Posterior vena cava (tissue), 2 donors: ENCODE measurements at regions of chr19 and their contacts with region 1.

Region 1: GRCh38 chr19:23799321-23799720 is 40.6 kb upstream of the ZNF681 start:
- DNase-seq: no peak

Region 2: GRCh38 chr19:23758187-23759074 is 40.9 kb before region 1 on chr19 and contains the start of gene ZNF681:
- intact Hi-C with region 1: loop called in 1 of 2 experiments (anchors 2 kb)
- DNase-seq: peak; percentile 95
- total RNA-seq, gene ZNF681: 1.5 to 1.6 TPM

Region 3: DNA sequence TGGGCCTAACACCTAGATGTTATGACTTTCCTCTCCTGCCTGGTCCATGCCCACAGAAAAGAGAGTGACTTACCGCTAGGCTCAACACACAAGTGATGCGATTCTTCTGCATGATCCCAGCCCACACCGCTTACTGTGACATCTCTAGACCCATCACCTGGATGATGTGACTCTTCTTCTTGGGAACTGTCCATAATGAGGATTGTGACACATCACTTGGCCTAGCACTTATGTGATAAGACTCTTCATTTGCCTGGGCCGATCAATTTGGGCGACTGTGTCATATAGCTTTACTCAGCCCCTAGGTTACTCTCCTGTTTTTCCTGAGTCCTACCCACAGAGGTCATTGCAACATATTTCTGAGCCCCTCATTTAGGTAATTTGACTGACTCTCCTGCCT is 20.8 kb before region 1 on chr19:
- intact Hi-C with region 1: loop called in 1 of 2 experiments (anchors 1 kb)
- DNase-seq: no peak

Region 4: GRCh38 chr19:23851971-23852370 is 52.6 kb after region 1 on chr19:
- intact Hi-C with region 1: no loop called
- DNase-seq: no peak